ENCODE measurements at regions of chr1 and their contacts with region 1.

Region 1: DNA sequence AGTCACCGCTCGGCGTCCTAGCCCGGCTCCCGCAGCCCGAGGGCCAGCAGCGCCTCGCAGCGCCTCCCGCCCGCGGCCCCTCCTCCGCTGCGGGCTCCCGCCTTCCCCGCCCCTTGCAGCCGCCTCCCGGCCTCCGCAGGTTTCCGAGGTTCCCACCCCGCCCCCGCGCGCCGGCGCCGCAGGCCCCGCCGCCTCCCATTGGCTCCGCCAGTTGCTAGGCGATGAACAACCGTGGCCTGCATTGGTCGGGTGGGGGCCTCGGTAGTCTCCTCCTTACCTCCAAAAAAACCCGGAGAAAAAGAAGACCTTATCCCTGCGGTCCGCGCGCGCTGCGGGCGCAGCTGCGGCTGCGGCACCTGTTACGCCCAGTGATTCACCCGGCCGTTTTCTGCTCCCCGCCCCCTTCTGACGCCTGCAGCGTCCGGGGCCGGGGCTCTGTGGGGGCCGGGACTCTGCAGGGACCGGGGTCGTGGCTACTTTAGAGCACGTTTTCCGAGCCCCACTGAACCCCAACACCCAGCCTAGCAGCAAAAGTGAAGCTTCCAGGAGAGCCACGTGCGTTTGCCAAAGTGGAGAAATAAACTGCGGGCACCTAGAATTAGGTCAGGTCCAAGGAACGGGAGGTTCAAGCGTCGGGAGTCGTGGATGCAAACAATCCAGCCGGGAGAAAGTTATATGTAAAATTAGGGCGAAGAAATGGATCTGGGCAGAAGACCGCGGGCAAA is at the start of gene SSX2IP:
- DNase-seq: peak; percentile 98 to 100 (median 99)
- ATAC-seq: peak; percentile 81
- H3K4me3 ChIP-seq: peak within 1 kb of the TSS; percentile 83 to 87
- H3K4me3 Mint-ChIP-seq: peak within 1 kb of the TSS; percentile 87
- H3K27ac ChIP-seq: peak within 1 kb of the TSS; percentile 85 to 88
- H3K27ac Mint-ChIP-seq: peak within 1 kb of the TSS; percentile 97
- H3K4me1 ChIP-seq: peaks cover 38% of the 10 kb centered on the region
- H3K4me1 Mint-ChIP-seq: peaks cover 59% of the 10 kb centered on the region
- H3K27me3 ChIP-seq: no peaks in the 10 kb centered on the region
- H3K27me3 Mint-ChIP-seq: no peaks in the 10 kb centered on the region
- CTCF ChIP-seq: no peak
- total RNA-seq, gene SSX2IP: 11.4 to 12.3 TPM

Region 2: DNA sequence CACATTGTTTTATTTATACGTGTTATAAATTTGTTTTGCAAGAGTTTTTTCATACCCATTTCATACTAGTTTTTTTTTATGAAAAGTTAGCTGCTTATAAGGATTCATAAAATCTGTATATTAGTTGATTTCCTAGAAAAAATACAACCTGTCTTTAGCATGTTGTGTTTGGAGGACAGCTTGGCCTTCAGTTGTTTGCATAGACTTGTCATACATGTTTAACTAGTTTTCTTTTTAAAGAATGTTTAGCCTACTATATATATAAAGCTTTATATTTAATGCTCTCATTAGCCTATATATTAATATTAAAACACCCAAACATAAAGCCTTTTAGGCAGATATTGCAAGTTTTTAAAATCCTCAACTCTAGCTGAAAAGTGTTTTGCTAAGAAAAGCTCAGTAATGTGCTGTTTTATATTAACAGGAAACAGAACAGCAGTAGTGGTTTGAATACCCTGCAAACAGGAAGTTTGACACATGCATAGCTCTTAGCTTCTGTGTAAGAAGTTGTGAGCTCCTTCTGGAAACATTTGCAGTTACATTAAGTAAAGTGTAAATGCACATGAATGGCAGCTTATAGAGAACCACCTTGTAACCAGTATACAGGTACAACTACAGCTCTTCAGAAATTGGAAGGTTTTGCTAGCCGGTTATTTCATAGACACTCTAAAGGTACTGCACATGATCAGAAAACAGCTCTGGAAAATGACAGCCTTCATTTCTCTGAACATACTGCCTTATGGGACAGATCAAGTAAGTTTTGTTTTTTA is 546.6 kb before region 1 on chr1 and contains the start of gene PRKACB:
- CTCF ChIA-PET with region 1: interaction called, 6 read pairs
- POLR2A ChIA-PET with region 1: interaction called, 3 read pairs
- intact Hi-C with region 1: loop called in 1 of 2 experiments (anchors 1 kb)
- DNase-seq: peak in 4 of 9 experiments; percentile 5 to 82 (median 36)
- ATAC-seq: peak; percentile 88
- H3K4me3 ChIP-seq: peak within 1 kb of the TSS; percentile 61 to 65
- H3K4me3 Mint-ChIP-seq: peak within 1 kb of the TSS; percentile 97
- H3K27ac ChIP-seq: peak within 1 kb of the TSS; percentile 59 to 82
- H3K27ac Mint-ChIP-seq: peak within 1 kb of the TSS; percentile 100
- H3K4me1 ChIP-seq: peaks cover 41% of the 10 kb centered on the region
- H3K4me1 Mint-ChIP-seq: peaks cover 45% of the 10 kb centered on the region
- H3K27me3 ChIP-seq: no peaks in the 10 kb centered on the region
- H3K27me3 Mint-ChIP-seq: no peaks in the 10 kb centered on the region
- CTCF ChIP-seq: no peak
- total RNA-seq, gene PRKACB: 50.9 to 55.8 TPM

Region 3: GRCh38 chr1:84442256-84442655 is 248.3 kb before region 1 on chr1:
- CTCF ChIA-PET with region 1: interaction called, 5 read pairs
- POLR2A ChIA-PET with region 1: no interaction called
- intact Hi-C with region 1: loop called (anchors 1 to 5 kb)
- DNase-seq: peak in 3 of 9 experiments; percentile 10 to 90 (median 83)
- ATAC-seq: peak; percentile 96
- H3K4me3 ChIP-seq: no peak overlapping the region
- H3K4me3 Mint-ChIP-seq: no peak overlapping the region
- H3K27ac ChIP-seq: no peak overlapping the region
- H3K27ac Mint-ChIP-seq: no peak overlapping the region
- H3K4me1 ChIP-seq: peaks cover 20% of the 10 kb centered on the region
- H3K4me1 Mint-ChIP-seq: peaks cover 15% of the 10 kb centered on the region
- H3K27me3 ChIP-seq: no peaks in the 10 kb centered on the region
- H3K27me3 Mint-ChIP-seq: peaks cover 4% of the 10 kb centered on the region
- CTCF ChIP-seq: peak; percentile 53

Region 4: GRCh38 chr1:84620720-84621313 is 69.7 kb before region 1 on chr1:
- CTCF ChIA-PET with region 1: no interaction called
- POLR2A ChIA-PET with region 1: no interaction called
- intact Hi-C with region 1: loop called (anchors 1 to 2 kb)
- DNase-seq: peak; percentile 63 to 91 (median 77)
- ATAC-seq: peak; percentile 91
- H3K4me3 ChIP-seq: peak overlapping the region; percentile 62 to 93
- H3K4me3 Mint-ChIP-seq: peak overlapping the region; percentile 91
- H3K27ac ChIP-seq: peak overlapping the region in 1 of 2 experiments; percentile 35
- H3K27ac Mint-ChIP-seq: peak overlapping the region; percentile 14
- H3K4me1 ChIP-seq: peaks cover 4% of the 10 kb centered on the region
- H3K4me1 Mint-ChIP-seq: peaks cover 2% of the 10 kb centered on the region
- H3K27me3 ChIP-seq: no peaks in the 10 kb centered on the region
- H3K27me3 Mint-ChIP-seq: peaks cover 5% of the 10 kb centered on the region
- CTCF ChIP-seq: peak; percentile 100

Region 5: DNA sequence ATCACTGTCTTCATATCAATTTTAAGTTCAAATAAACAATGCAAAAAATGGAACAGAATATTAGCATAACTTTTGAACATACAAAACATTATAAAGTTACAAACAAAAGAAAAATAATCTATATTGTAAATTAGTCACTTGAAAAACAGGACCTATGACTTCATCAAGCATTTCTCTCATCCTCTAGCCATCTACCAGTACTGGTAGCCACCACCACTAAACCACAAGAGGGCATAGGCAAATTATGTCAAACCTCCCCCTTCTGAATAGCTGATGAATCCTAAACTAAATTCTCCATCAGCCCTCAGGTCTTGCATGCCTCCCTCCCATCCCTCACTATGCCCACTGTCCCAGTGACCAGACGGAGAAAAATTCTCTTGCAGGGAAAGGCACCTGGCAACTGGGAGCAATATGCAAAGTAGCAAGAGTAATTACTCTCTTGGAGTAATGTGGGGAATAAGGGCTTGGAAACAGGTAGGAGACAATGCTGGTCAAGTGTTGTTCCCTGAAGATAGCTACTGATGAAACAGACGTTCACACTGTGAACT is 37.4 kb before region 1 on chr1:
- CTCF ChIA-PET with region 1: no interaction called
- POLR2A ChIA-PET with region 1: no interaction called
- intact Hi-C with region 1: no loop called
- DNase-seq: peak in 2 of 9 experiments; percentile 4 to 10
- ATAC-seq: no peak
- H3K4me3 ChIP-seq: no peak overlapping the region
- H3K4me3 Mint-ChIP-seq: no peak overlapping the region
- H3K27ac ChIP-seq: no peak overlapping the region
- H3K27ac Mint-ChIP-seq: no peak overlapping the region
- H3K4me1 ChIP-seq: no peaks in the 10 kb centered on the region
- H3K4me1 Mint-ChIP-seq: no peaks in the 10 kb centered on the region
- H3K27me3 ChIP-seq: no peaks in the 10 kb centered on the region
- H3K27me3 Mint-ChIP-seq: no peaks in the 10 kb centered on the region
- CTCF ChIP-seq: no peak

Region 6: DNA sequence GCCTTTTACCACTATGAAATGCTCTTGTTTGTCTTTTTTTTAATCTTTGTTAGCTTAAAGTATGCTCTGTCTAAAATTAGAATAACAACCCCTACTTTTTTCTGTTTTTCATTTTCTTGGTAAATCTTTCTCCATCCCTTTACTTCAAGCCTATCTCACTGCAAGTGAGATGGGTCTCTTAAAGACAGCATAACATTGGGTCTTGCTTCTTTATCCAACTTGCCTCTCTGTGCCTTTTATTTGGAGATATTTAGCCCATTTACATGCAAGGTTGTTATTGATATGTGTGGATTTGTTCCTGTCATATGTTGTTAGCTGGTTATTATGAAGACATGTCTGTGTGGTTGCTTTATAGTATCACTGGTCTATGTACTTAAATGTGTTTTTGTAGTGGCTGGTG is 41.0 kb after region 1 on chr1:
- CTCF ChIA-PET with region 1: no interaction called
- POLR2A ChIA-PET with region 1: no interaction called
- intact Hi-C with region 1: no loop called
- DNase-seq: no peak
- ATAC-seq: no peak
- H3K4me3 ChIP-seq: no peak overlapping the region
- H3K4me3 Mint-ChIP-seq: no peak overlapping the region
- H3K27ac ChIP-seq: no peak overlapping the region
- H3K27ac Mint-ChIP-seq: no peak overlapping the region
- H3K4me1 ChIP-seq: no peaks in the 10 kb centered on the region
- H3K4me1 Mint-ChIP-seq: peaks cover 2% of the 10 kb centered on the region
- H3K27me3 ChIP-seq: no peaks in the 10 kb centered on the region
- H3K27me3 Mint-ChIP-seq: peaks cover 17% of the 10 kb centered on the region
- CTCF ChIP-seq: no peak

Region 7: DNA sequence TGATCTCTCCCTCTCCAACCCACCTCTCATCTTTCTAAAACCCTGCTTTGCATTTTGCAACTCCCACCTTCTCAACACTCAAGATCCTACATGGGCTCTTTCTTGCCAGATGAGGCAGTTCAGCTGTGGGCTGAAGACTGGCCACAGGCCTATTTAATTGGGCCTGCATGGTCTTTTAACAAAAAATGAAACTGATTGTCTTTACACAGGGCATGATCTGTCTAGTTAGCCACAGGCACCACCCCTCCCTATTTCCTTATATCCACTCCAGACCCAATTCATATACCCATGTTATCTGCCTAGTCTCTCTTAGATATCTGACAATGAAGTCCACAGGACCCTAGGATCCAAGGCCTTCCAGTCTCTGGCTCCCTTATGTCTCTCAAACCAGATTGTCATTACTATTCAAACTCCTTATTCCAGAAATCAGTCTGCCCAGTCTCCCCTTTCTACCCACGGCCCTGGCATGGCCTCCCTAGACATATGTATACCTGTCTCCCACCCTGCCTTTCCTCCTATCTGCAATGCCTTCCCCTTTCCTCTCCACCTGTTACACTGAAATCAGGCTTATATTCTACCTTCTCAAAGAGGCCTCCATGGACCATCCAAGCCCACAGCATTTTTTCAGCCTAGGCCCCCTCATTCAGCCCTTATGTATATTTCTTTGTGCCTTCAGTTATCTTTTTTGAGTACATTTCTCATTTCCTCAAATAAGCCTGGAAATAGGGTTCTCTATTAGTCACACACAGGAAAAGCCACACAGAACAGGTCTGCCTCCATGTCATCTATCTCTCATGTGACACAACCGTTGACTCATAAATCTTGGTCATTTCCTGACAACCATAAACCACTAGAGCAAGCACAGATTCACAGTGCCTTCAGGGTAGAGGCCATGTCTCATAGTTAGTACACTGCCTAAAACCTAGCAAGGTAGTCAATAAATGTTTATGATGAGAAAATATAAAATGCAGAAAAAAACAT is 163.5 kb after region 1 on chr1:
- CTCF ChIA-PET with region 1: no interaction called
- POLR2A ChIA-PET with region 1: no interaction called
- intact Hi-C with region 1: loop called in 1 of 2 experiments (anchors 10 kb)
- DNase-seq: peak in 7 of 9 experiments; percentile 22 to 80 (median 50)
- ATAC-seq: peak; percentile 98
- H3K4me3 ChIP-seq: no peak overlapping the region
- H3K4me3 Mint-ChIP-seq: no peak overlapping the region
- H3K27ac ChIP-seq: peak overlapping the region in 1 of 2 experiments; percentile 47
- H3K27ac Mint-ChIP-seq: peak overlapping the region; percentile 62
- H3K4me1 ChIP-seq: peaks cover 24% of the 10 kb centered on the region
- H3K4me1 Mint-ChIP-seq: peaks cover 42% of the 10 kb centered on the region
- H3K27me3 ChIP-seq: no peaks in the 10 kb centered on the region
- H3K27me3 Mint-ChIP-seq: no peaks in the 10 kb centered on the region
- CTCF ChIP-seq: no peak

Region 8: GRCh38 chr1:85259118-85259911 is 568.8 kb after region 1 on chr1 and contains the start of gene C1orf52:
- CTCF ChIA-PET with region 1: no interaction called
- POLR2A ChIA-PET with region 1: no interaction called
- intact Hi-C with region 1: loop called in 1 of 2 experiments (anchors 5 kb)
- DNase-seq: peak; percentile 86 to 99 (median 98)
- ATAC-seq: peak; percentile 96
- H3K4me3 ChIP-seq: peak within 1 kb of the TSS; percentile 65 to 93
- H3K4me3 Mint-ChIP-seq: peak within 1 kb of the TSS; percentile 97
- H3K27ac ChIP-seq: peak within 1 kb of the TSS; percentile 78 to 88
- H3K27ac Mint-ChIP-seq: peak within 1 kb of the TSS; percentile 95
- H3K4me1 ChIP-seq: peaks cover 24% of the 10 kb centered on the region
- H3K4me1 Mint-ChIP-seq: peaks cover 36% of the 10 kb centered on the region
- H3K27me3 ChIP-seq: no peaks in the 10 kb centered on the region
- H3K27me3 Mint-ChIP-seq: no peaks in the 10 kb centered on the region
- CTCF ChIP-seq: peak; percentile 99
- total RNA-seq, gene C1orf52: 70.7 to 74.4 TPM